GM13976 (cell line): ENCODE measurements at regions of chr19 and their contacts with region 1.

Region 1: GRCh38 chr19:1605236-1606137 is at the start of gene UQCR11:
- DNase-seq: peak; percentile 98
- CTCF ChIP-seq: peak; percentile 51

Region 2: DNA sequence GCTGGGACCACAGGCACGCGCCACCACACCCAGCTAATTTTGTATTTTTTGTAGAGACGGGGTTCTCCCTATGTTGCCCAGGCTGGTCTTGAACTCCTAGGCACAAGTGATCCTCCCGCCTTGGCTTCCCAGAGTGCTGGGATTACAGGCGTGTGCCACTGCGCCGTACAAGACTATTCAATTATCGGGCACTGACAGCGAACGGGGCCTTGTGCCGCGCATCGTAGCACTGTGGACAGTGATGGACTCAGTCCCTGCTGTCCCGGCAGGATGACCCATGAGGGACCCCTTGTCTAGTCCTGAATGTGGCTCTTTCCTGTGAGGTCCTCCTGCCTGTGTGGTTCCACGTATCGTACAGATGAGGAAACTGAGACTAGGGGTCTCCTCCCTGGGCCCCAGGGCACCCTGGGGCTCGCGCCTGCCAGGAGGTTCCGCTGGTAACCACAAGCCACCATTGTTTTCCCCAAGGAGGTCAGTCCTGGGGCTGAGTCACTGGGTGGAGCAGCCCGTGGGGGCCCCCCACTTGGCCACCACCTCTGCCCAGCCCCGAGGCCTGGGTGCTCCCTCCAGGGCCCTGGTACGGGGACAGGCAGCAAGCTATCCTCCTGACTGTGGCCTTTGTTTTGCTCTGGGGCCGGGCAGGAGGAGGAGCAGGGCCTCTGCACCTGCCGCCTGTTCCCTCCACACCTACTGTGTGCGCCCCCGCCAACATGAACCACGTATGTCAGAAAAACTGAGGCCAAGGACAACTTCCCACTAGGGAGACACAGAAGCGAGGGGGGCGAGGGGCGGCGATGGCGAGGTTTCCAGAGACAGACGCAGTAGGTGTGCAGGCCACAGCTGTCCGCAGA is 49.9 kb after region 1 on chr19:
- in situ Hi-C with region 1: loop called (anchors 5 kb)
- DNase-seq: no peak
- CTCF ChIP-seq: no peak